Naive thymus-derived CD4-positive, alpha-beta T cell (primary cell): ENCODE measurements at regions of chr3 and their contacts with region 1.

Region 1: GRCh38 chr3:73086071-73086494 is 24.6 kb downstream of the EBLN2 start:
- DNase-seq: peak; percentile 16 to 56 (median 43)
- ATAC-seq: peak; percentile 82
- H3K4me3 ChIP-seq: peak overlapping the region; percentile 11
- H3K4me3 Mint-ChIP-seq: peak overlapping the region in 8 of 10 donors; percentile 25 to 70 (median 57)
- H3K27ac ChIP-seq: no peak overlapping the region
- H3K27ac Mint-ChIP-seq: peak overlapping the region in 1 of 9 donors; percentile 42
- H3K4me1 ChIP-seq: peaks cover 0 to 8% of the 10 kb centered on the region in 2 donors
- H3K4me1 Mint-ChIP-seq: peaks cover 0 to 9% (median 7%) of the 10 kb centered on the region in 7 donors
- H3K27me3 ChIP-seq: no peaks in the 10 kb centered on the region
- H3K27me3 Mint-ChIP-seq: peaks cover 0 to 3% (median 0%) of the 10 kb centered on the region in 5 donors

Region 2: DNA sequence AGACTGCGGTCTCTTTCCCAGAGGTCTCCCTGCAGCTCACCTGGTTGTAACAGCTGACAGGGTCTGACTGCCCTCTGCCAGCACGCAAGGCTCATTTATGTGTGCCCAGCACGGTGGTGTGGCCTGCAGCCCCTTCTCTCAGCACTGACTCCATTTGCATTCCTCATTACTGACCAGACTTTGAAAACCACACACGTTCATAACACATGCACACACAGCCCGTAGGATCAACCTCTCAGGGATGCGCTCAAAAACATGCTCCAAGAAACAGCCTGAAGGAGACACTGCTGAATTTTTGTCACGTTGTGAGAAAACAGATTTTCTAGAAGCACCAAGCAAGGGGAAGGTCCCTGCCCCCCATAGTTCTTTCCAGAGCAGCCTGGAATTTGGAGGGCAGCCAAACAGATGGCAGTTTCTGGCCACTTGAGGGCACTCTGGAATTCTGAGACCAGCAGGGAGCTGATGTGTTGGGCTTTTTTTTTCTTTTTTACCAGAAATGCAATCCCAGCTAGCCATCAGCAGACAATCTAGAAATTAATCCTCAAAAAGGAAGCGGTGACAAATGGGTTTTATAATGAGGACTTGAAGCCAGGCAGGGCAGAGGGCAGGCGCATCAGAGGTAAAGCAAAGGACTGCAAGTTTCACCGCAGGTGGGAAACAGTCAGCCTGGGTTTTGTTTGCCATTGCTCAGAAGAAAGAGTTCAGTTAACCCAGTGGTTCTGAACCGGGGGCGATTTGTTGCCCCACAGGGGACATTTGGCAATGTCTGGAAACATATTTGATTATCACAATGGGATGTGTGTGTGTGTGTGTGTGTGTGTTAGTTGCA is 1130.6 kb before region 1 on chr3:
- CTCF ChIA-PET with region 1: no interaction called
- POLR2A ChIA-PET with region 1: no interaction called
- intact Hi-C with region 1: loop called in 1 of 2 experiments (anchors 10 kb)
- DNase-seq: peak in 3 of 9 donors; percentile 5 to 27 (median 17)
- ATAC-seq: no peak
- H3K4me3 ChIP-seq: no peak overlapping the region
- H3K4me3 Mint-ChIP-seq: no peak overlapping the region
- H3K27ac ChIP-seq: no peak overlapping the region
- H3K27ac Mint-ChIP-seq: peak overlapping the region in 1 of 9 donors; percentile 28
- H3K4me1 ChIP-seq: no peaks in the 10 kb centered on the region
- H3K4me1 Mint-ChIP-seq: peaks cover 0 to 43% (median 13%) of the 10 kb centered on the region in 7 donors
- H3K27me3 ChIP-seq: no peaks in the 10 kb centered on the region
- H3K27me3 Mint-ChIP-seq: no peaks in the 10 kb centered on the region

Region 3: GRCh38 chr3:72938471-72939265 is 147.4 kb before region 1 on chr3:
- CTCF ChIA-PET with region 1: interaction called, 10 read pairs
- POLR2A ChIA-PET with region 1: no interaction called
- intact Hi-C with region 1: loop called (anchors 1 kb)
- DNase-seq: peak in 7 of 9 donors; percentile 48 to 76 (median 62)
- ATAC-seq: peak; percentile 99
- H3K4me3 ChIP-seq: no peak overlapping the region
- H3K4me3 Mint-ChIP-seq: no peak overlapping the region
- H3K27ac ChIP-seq: no peak overlapping the region
- H3K27ac Mint-ChIP-seq: no peak overlapping the region
- H3K4me1 ChIP-seq: no peaks in the 10 kb centered on the region
- H3K4me1 Mint-ChIP-seq: no peaks in the 10 kb centered on the region
- H3K27me3 ChIP-seq: no peaks in the 10 kb centered on the region
- H3K27me3 Mint-ChIP-seq: peaks cover 0 to 28% (median 0%) of the 10 kb centered on the region in 5 donors

Region 4: DNA sequence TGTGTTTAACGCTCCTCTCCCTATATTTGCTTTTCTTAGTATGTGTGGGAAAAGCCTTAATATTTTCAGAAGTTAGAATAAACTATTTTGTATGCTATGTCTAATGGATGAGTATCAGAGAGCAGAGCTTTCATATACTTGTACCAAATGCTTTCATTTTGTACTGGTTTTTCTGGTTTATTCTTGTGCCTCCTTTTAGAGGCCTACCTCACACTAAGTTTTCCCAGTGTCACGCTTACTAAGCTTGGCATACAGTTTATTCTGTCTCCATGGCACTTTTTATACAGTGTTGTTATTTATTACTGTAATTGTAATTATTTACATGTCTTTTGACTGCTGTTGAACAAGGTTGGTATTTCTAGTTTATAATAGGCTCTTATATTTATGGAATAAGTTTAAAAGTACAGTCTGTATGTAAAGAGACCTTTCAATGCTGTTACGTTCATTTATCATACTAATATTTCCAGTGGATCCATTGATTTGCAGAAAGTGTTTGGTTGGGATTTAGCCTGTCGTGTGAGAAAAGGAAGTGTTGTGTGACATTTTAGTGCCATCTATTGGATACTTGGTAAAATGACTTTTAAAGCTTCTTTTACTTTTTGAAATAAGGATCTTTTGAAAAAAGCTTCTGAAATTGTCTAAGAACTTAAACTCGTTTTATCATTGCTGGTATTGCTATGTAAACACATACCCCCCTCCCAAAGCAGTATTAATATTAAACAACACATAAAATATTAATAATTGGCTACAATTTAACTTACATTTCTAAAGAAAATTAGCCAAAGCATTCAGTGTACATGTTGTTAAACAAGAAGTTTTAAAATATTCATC is 29.9 kb before region 1 on chr3:
- CTCF ChIA-PET with region 1: interaction called, 10 read pairs
- POLR2A ChIA-PET with region 1: no interaction called
- intact Hi-C with region 1: no loop called
- DNase-seq: peak in 6 of 9 donors; percentile 16 to 52 (median 26)
- ATAC-seq: peak; percentile 54
- H3K4me3 ChIP-seq: no peak overlapping the region
- H3K4me3 Mint-ChIP-seq: no peak overlapping the region
- H3K27ac ChIP-seq: no peak overlapping the region
- H3K27ac Mint-ChIP-seq: peak overlapping the region in 6 of 9 donors; percentile 14 to 46 (median 30)
- H3K4me1 ChIP-seq: no peaks in the 10 kb centered on the region
- H3K4me1 Mint-ChIP-seq: peaks cover 8 to 30% (median 26%) of the 10 kb centered on the region in 7 donors
- H3K27me3 ChIP-seq: no peaks in the 10 kb centered on the region
- H3K27me3 Mint-ChIP-seq: no peaks in the 10 kb centered on the region